Colonic mucosa (tissue), 4 donors: ENCODE measurements at regions of chr21 and their contacts with region 1.

Region 1: GRCh38 chr21:45554477-45555175 is 12.4 kb upstream of the SLC19A1 start:
- DNase-seq: peak; percentile 90
- H3K4me3 ChIP-seq: peak overlapping the region; percentile 36
- H3K27ac ChIP-seq: peak overlapping the region; percentile 10
- H3K4me1 ChIP-seq: peaks cover 5% of the 10 kb centered on the region
- H3K27me3 ChIP-seq: no peaks in the 10 kb centered on the region
- CTCF ChIP-seq: peak; percentile 60

Region 2: GRCh38 chr21:45478115-45478801 is 76.4 kb before region 1 on chr21:
- intact Hi-C with region 1: no loop called
- DNase-seq: peak; percentile 68
- H3K4me3 ChIP-seq: no peak overlapping the region
- H3K27ac ChIP-seq: peak overlapping the region; percentile 23
- H3K4me1 ChIP-seq: no peaks in the 10 kb centered on the region
- H3K27me3 ChIP-seq: no peaks in the 10 kb centered on the region
- CTCF ChIP-seq: peak; percentile 88

Region 3: DNA sequence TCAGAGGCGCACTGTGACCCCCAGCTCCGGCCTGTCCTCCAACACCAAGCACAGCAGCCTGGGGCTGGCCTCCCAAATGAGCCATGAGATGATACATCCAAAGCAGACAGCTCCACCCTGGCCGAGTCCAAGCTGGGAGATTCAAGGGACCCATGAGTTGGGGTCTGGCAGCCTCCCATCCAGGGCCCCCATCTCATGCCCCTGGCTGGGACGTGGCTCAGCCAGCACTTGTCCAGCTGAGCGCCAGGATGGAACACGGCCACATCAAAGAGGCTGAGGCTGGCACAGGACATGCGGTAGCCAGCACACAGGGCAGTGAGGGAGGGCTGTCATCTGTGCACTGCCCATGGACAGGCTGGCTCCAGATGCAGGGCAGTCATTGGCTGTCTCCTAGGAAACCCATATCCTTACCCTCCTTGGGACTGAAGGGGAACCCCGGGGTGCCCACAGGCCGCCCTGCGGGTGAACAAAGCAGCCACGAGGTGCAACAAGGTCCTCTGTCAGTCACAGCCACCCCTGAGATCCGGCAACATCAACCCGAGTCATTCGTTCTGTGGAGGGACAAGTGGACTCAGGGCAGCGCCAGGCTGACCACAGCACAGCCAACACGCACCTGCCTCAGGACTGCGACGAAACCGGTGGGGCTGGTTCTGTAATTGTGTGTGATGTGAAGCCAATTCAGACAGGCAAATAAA is 41.5 kb before region 1 on chr21:
- intact Hi-C with region 1: no loop called
- DNase-seq: no peak
- H3K4me3 ChIP-seq: no peak overlapping the region
- H3K27ac ChIP-seq: no peak overlapping the region
- H3K4me1 ChIP-seq: no peaks in the 10 kb centered on the region
- H3K27me3 ChIP-seq: no peaks in the 10 kb centered on the region
- CTCF ChIP-seq: no peak

Region 4: GRCh38 chr21:45818904-45819285 is 264.3 kb after region 1 on chr21:
- intact Hi-C with region 1: loop called (anchors 5 kb)
- DNase-seq: no peak
- H3K4me3 ChIP-seq: no peak overlapping the region
- H3K27ac ChIP-seq: no peak overlapping the region
- H3K4me1 ChIP-seq: no peaks in the 10 kb centered on the region
- H3K27me3 ChIP-seq: no peaks in the 10 kb centered on the region
- CTCF ChIP-seq: no peak